Caco-2 (cell line): ENCODE measurements at regions of chr11 and their contacts with region 1.

Region 1: GRCh38 chr11:86818466-86819192 is 18.3 kb downstream of the PRSS23 start:
- DNase-seq: peak in 1 of 2 experiments; percentile 74
- H3K4me3 ChIP-seq: no peak overlapping the region
- H3K4me3 Mint-ChIP-seq: no peak overlapping the region
- H3K27ac Mint-ChIP-seq: peak overlapping the region; percentile 23
- H3K4me1 ChIP-seq: peaks cover 52% of the 10 kb centered on the region
- H3K4me1 Mint-ChIP-seq: peaks cover 41% of the 10 kb centered on the region
- H3K27me3 ChIP-seq: no peaks in the 10 kb centered on the region
- H3K27me3 Mint-ChIP-seq: no peaks in the 10 kb centered on the region
- CTCF ChIP-seq: peak; percentile 83 to 95

Region 2: DNA sequence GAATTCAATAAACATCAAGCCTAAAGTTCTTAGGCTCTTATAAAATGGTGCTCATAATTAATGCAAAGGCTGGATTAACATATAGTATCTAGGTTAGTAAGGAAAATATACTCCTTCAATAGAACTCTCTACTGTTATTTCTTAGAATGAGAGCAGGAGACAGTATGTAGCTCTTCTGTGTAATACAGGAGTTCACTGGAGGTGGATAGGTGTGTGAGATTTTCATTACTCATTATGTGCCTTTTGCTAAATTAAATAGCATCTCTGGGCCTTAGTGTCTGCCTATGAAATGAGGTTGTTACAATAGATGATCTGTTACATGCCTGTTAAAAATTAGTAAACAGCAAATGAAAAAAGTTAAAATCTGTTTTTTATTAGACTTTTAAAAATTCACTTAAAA is 553.4 kb before region 1 on chr11:
- CTCF ChIA-PET with region 1: no interaction called
- POLR2A ChIA-PET with region 1: no interaction called
- intact Hi-C with region 1: no loop called
- DNase-seq: no peak
- H3K4me3 ChIP-seq: no peak overlapping the region
- H3K4me3 Mint-ChIP-seq: no peak overlapping the region
- H3K27ac Mint-ChIP-seq: no peak overlapping the region
- H3K4me1 ChIP-seq: no peaks in the 10 kb centered on the region
- H3K4me1 Mint-ChIP-seq: no peaks in the 10 kb centered on the region
- H3K27me3 ChIP-seq: no peaks in the 10 kb centered on the region
- H3K27me3 Mint-ChIP-seq: no peaks in the 10 kb centered on the region
- CTCF ChIP-seq: no peak

Region 3: GRCh38 chr11:86456052-86456939 is 362.3 kb before region 1 on chr11:
- CTCF ChIA-PET with region 1: no interaction called
- POLR2A ChIA-PET with region 1: no interaction called
- intact Hi-C with region 1: loop called (anchors 1 kb)
- DNase-seq: peak; percentile 91 to 93
- H3K4me3 ChIP-seq: no peak overlapping the region
- H3K4me3 Mint-ChIP-seq: no peak overlapping the region
- H3K27ac Mint-ChIP-seq: peak overlapping the region; percentile 65
- H3K4me1 ChIP-seq: peaks cover 29% of the 10 kb centered on the region
- H3K4me1 Mint-ChIP-seq: peaks cover 41% of the 10 kb centered on the region
- H3K27me3 ChIP-seq: no peaks in the 10 kb centered on the region
- H3K27me3 Mint-ChIP-seq: no peaks in the 10 kb centered on the region
- CTCF ChIP-seq: peak; percentile 98

Region 4: GRCh38 chr11:86632499-86633269 is 185.9 kb before region 1 on chr11:
- CTCF ChIA-PET with region 1: no interaction called
- POLR2A ChIA-PET with region 1: no interaction called
- intact Hi-C with region 1: loop called (anchors 1 kb)
- DNase-seq: peak; percentile 60 to 69
- H3K4me3 ChIP-seq: no peak overlapping the region
- H3K4me3 Mint-ChIP-seq: no peak overlapping the region
- H3K27ac Mint-ChIP-seq: no peak overlapping the region
- H3K4me1 ChIP-seq: peaks cover 10% of the 10 kb centered on the region
- H3K4me1 Mint-ChIP-seq: no peaks in the 10 kb centered on the region
- H3K27me3 ChIP-seq: no peaks in the 10 kb centered on the region
- H3K27me3 Mint-ChIP-seq: no peaks in the 10 kb centered on the region
- CTCF ChIP-seq: peak; percentile 26 to 51